H1 (cell line): ENCODE measurements at regions of chr6 and their contacts with region 1.

Region 1: DNA sequence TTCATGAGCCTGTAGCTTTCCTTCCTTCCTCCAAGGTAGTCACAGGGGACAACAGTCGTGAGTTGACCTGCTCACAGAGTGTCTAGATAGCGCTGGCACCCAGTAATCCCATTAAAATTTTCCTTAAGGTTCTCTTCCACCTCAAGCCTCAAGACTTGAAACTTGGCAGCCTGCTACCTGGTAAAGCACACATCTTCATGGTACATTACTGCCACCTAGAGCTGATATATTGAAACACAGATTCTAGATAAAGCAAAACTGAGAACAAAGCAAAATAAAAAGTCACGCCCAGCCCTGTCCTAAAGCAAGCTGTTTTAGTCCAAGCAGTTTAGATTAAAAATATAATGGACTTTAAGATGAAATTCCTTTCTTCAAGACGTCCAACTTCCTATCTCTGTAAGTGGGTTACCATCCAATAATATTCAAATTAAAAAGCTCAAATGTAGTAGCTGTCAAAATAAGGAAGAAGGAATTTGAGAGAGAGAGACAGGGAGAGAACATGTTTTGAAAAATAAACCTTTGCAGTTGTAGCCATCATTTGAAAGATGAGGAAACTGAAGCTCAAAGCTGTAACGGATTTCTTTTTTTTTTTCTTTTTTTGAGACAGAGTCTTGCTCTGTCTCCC is 50.7 kb upstream of the CD83 start:
- DNase-seq: no peak
- H3K4me3 ChIP-seq: no peak overlapping the region
- H3K27ac ChIP-seq: no peak overlapping the region
- H3K4me1 ChIP-seq: no peaks in the 10 kb centered on the region
- H3K27me3 ChIP-seq: no peaks in the 10 kb centered on the region
- CTCF ChIP-seq: peak in 2 of 3 experiments; percentile 61 to 69; a peak in 2 of 4 replicates
- EP300 ChIP-seq: no peak
- POLR2A ChIP-seq: no peak
- RAD21 ChIP-seq: peak; percentile 92 to 93

Region 2: DNA sequence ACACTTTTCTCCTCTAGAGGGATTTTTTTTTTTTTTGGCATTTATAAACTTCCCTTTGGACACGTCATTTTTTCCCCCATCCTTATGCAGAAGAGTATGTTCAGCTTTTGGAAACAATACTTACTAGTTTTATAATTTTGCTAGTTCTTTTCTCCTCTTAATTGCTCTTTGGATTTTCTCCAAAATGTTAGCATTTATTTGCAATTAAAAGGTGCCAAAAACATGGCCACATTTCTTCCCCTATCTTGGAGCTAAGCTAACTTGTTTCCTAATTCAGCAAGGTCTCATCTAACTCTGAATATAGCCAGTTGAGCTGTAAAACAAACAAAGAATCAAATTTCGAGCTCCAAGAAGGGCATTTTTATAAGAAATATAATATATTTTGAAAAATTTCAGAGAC is 181.3 kb before region 1 on chr6:
- CTCF ChIA-PET with region 1: interaction called, 10 read pairs
- POLR2A ChIA-PET with region 1: no interaction called
- DNase-seq: no peak
- H3K4me3 ChIP-seq: no peak overlapping the region
- H3K27ac ChIP-seq: no peak overlapping the region
- H3K4me1 ChIP-seq: no peaks in the 10 kb centered on the region
- H3K27me3 ChIP-seq: no peaks in the 10 kb centered on the region
- CTCF ChIP-seq: no peak
- EP300 ChIP-seq: no peak
- POLR2A ChIP-seq: no peak
- RAD21 ChIP-seq: no peak

Region 3: DNA sequence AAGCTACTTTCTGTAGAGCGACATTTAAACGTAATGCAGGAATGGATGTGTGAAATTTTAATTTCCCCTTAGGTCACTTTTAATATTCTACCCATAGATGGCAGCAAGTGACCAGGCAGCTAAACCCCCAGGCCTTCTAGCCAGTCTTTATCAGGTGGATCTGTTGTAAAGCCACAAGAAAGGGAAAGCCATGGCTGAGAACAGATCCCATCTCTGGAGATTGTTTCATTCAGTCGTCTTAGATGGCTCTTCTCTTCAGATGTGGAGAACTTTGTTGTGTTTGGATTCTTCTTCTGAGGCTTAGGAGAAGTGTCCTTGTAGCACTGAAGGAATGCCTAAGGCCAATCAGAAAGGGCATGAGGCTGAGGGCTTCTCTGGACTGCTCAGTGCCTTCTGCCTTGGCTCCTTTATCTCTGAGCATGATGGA is 157.9 kb before region 1 on chr6:
- CTCF ChIA-PET with region 1: interaction called, 193 read pairs
- POLR2A ChIA-PET with region 1: no interaction called
- DNase-seq: no peak
- H3K4me3 ChIP-seq: no peak overlapping the region
- H3K27ac ChIP-seq: no peak overlapping the region
- H3K4me1 ChIP-seq: peaks cover 0 to 6% (median 0%) of the 10 kb centered on the region in 4 experiments; a peak in 1 of 7 replicates
- H3K27me3 ChIP-seq: no peaks in the 10 kb centered on the region
- CTCF ChIP-seq: peak in 2 of 3 experiments; percentile 72 to 87; a peak in 3 of 4 replicates
- EP300 ChIP-seq: no peak
- POLR2A ChIP-seq: no peak
- RAD21 ChIP-seq: peak; percentile 98

Region 4: GRCh38 chr6:13932785-13933184 is 134.1 kb before region 1 on chr6:
- CTCF ChIA-PET with region 1: no interaction called
- POLR2A ChIA-PET with region 1: no interaction called
- DNase-seq: no peak
- H3K4me3 ChIP-seq: no peak overlapping the region
- H3K27ac ChIP-seq: no peak overlapping the region
- H3K4me1 ChIP-seq: peaks cover 0 to 10% (median 2%) of the 10 kb centered on the region in 4 experiments; a peak in 4 of 7 replicates
- H3K27me3 ChIP-seq: no peaks in the 10 kb centered on the region
- CTCF ChIP-seq: no peak
- EP300 ChIP-seq: no peak
- POLR2A ChIP-seq: no peak
- RAD21 ChIP-seq: no peak

Region 5: DNA sequence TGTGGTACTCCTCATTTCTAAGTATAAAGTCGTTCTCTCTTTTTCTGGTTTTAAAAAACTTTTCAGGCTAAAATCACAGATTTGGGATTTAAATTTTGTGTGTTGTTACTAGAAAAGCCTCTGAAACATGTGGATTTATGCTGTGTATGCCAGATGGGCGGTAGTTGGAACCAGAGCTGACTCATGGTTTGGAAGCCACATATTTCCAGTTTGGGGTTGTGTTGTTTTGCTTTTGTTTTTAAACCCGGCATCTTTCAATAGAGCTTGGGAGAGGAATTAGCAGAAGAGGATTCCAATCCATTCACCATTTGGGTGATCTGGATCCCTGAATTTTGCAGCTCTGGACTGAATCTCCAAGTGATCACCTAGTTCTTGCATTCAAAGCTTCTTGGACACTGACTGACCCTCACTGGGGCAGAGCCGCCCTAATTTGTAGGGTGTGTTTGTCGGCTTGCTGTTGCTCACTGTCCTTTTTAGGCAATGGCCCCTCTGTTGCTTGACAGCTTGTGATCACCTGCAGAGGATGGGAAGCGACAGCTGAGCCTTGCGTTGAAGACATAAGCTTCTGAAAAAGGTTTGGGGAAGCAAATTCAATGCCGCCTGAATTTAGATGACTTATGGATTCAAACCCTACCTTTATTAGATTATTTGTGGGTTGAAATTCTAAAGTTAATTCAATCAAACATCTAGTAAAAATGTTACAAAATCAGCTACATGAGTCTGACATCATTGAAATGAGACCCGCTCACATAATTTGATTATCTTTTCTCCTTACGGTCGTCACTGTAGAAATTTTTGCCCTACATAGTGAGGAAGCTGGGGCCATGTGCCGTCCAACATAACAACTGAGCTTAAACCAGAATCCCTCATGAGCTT is 29.3 kb before region 1 on chr6:
- CTCF ChIA-PET with region 1: interaction called, 19 read pairs
- POLR2A ChIA-PET with region 1: no interaction called
- DNase-seq: no peak
- H3K4me3 ChIP-seq: no peak overlapping the region
- H3K27ac ChIP-seq: no peak overlapping the region
- H3K4me1 ChIP-seq: peaks cover 2 to 11% (median 6%) of the 10 kb centered on the region in 4 experiments; a peak in 5 of 7 replicates
- H3K27me3 ChIP-seq: no peaks in the 10 kb centered on the region
- CTCF ChIP-seq: no peak
- EP300 ChIP-seq: no peak
- POLR2A ChIP-seq: no peak
- RAD21 ChIP-seq: no peak

Region 6: GRCh38 chr6:14055541-14055940 is 11.4 kb before region 1 on chr6:
- CTCF ChIA-PET with region 1: interaction called, 29 read pairs
- POLR2A ChIA-PET with region 1: no interaction called
- DNase-seq: no peak
- H3K4me3 ChIP-seq: no peak overlapping the region
- H3K27ac ChIP-seq: no peak overlapping the region
- H3K4me1 ChIP-seq: peaks cover 0 to 3% (median 0%) of the 10 kb centered on the region in 4 experiments; a peak in 1 of 7 replicates
- H3K27me3 ChIP-seq: no peaks in the 10 kb centered on the region; a peak in 1 of 7 replicates
- CTCF ChIP-seq: no peak
- EP300 ChIP-seq: no peak
- POLR2A ChIP-seq: no peak
- RAD21 ChIP-seq: no peak

Region 7: DNA sequence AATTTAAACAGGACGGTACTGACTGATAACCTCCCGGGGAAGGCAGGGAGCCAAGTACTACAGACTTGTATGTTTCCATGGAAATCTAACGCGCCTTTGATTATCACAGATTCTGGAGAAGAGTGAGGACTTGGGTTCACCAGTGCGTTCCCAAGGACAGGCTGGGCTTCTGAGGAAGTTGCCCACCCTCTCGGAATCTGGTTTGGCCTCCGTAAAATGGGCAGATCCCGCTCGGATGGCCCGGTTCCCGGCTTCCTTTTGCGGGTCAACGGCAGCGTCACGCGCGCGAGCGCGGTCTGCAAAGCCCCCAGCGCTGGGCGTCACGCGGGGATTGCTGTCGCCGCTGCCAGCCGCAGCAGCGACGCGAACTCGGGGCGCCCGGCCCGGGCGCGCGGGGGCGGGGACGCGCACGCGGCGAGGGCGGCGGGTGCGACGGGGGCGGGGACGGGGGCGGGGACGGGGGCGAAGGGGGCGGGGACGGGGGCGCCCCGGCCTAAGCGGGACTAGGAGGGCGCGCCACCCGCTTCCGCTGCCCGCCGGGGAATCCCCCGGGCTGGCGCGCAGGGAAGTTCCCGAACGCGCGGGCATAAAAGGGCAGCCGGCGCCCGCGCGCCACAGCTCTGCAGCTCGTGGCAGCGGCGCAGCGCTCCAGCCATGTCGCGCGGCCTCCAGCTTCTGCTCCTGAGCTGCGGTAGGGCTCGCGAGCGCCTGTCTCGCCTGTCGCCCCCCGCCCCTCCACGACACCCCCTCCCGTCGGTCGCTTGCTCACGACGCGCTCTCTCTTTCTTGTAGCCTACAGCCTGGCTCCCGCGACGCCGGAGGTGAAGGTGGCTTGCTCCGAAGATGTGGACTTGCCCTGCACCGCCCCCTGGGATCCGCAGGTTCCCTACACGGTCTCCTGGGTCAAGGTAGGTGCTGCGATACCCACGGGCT is 50.5 kb after region 1 on chr6 and contains the start of gene CD83:
- CTCF ChIA-PET with region 1: no interaction called
- POLR2A ChIA-PET with region 1: no interaction called
- DNase-seq: peak in 1 of 2 experiments; percentile 68
- H3K4me3 ChIP-seq: peak within 1 kb of the TSS; percentile 61 to 96 (median 84)
- H3K27ac ChIP-seq: no peak within 1 kb of the TSS
- H3K4me1 ChIP-seq: peaks cover 0 to 4% (median 0%) of the 10 kb centered on the region in 4 experiments; a peak in 1 of 7 replicates
- H3K27me3 ChIP-seq: peaks cover 0 to 10% (median 7%) of the 10 kb centered on the region in 4 experiments; a peak in 2 of 7 replicates
- CTCF ChIP-seq: peak; percentile 14 to 34 (median 24); a peak in 3 of 4 replicates
- EP300 ChIP-seq: no peak
- POLR2A ChIP-seq: 0 out of 3 replicates have a peak, but pooled peaks of 1 of the 2 experiments have one; percentile 17
- RAD21 ChIP-seq: peak in 1 of 2 experiments; percentile 29; a peak in 2 of 4 replicates
- total RNA-seq, gene CD83: 8.5 and 8.8 TPM in 2 replicates

Region 8: DNA sequence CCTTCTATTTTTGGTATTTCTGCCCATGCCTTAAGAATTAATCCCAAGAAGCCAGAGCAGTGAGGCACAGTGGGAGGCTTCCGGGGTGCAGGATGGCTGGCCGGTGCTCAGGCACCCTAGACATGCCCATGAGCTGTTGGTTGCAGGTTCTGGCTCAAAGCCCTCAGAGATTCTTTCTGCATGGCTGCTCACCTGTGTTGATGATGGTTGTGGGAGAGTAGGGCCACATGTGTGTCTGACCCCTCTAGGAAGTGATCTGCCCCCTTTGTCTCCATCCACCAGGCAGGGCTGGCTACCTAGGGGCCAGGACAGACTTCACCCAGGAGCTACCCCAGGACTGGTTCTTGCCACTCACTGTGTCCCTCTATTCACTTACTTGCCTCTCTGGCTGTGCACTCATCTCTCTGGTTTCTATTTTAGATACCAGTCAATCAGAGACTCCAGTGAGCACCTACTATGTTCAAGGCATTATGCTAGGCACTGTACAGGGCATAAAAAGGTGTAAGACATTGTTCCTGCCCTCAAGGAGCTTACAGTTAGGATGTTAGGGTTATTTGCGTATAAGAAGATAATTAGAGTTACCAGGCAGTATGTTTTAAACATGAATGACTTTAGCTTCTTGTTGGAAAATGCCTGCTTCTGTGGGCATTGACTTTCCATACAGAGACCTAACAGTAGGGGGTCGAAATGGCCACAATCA is 67.5 kb after region 1 on chr6:
- CTCF ChIA-PET with region 1: no interaction called
- POLR2A ChIA-PET with region 1: no interaction called
- DNase-seq: no peak
- H3K4me3 ChIP-seq: no peak overlapping the region
- H3K27ac ChIP-seq: no peak overlapping the region
- H3K4me1 ChIP-seq: peaks cover 0 to 4% (median 2%) of the 10 kb centered on the region in 4 experiments; a peak in 3 of 7 replicates
- H3K27me3 ChIP-seq: no peaks in the 10 kb centered on the region; a peak in 1 of 7 replicates
- CTCF ChIP-seq: no peak
- EP300 ChIP-seq: no peak
- POLR2A ChIP-seq: no peak
- RAD21 ChIP-seq: no peak